Caco-2 (cell line): ENCODE measurements at regions of chr16 and their contacts with region 1.

Region 1: DNA sequence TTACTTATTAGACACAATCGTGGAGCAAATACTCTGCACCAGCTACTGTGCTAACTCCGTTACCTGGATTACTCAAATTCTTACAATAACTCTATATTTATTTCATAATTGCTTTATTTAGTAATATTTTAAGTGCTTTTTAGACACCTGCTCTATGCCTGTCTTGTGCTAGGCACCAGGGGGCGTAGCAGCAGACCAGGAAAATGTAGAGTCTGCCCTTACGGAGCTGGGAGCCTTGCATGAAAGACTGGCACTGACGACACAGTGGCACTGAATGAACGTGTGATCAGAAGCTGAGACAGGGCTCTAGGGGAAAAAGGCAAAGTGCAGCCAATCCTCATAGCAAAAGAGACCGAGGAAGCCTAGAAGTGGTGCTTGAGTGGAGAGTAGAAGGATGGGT is 486.5 kb downstream of the CDH13 start:
- DNase-seq: peak; percentile 46 to 56
- H3K4me3 ChIP-seq: no peak overlapping the region
- H3K4me3 Mint-ChIP-seq: no peak overlapping the region
- H3K27ac Mint-ChIP-seq: no peak overlapping the region
- H3K4me1 ChIP-seq: no peaks in the 10 kb centered on the region
- H3K4me1 Mint-ChIP-seq: no peaks in the 10 kb centered on the region
- H3K27me3 ChIP-seq: no peaks in the 10 kb centered on the region; the same call in 1 of the 2 replicates
- H3K27me3 Mint-ChIP-seq: peaks cover 2% of the 10 kb centered on the region
- CTCF ChIP-seq: peak; percentile 70 to 81

Region 2: GRCh38 chr16:83059237-83059636 is 54.1 kb before region 1 on chr16:
- CTCF ChIA-PET with region 1: no interaction called
- POLR2A ChIA-PET with region 1: no interaction called
- intact Hi-C with region 1: loop called (anchors 2 kb)
- DNase-seq: peak in 1 of 2 experiments; percentile 9
- H3K4me3 ChIP-seq: no peak overlapping the region
- H3K4me3 Mint-ChIP-seq: no peak overlapping the region
- H3K27ac Mint-ChIP-seq: no peak overlapping the region
- H3K4me1 ChIP-seq: no peaks in the 10 kb centered on the region
- H3K4me1 Mint-ChIP-seq: no peaks in the 10 kb centered on the region
- H3K27me3 ChIP-seq: no peaks in the 10 kb centered on the region
- H3K27me3 Mint-ChIP-seq: peaks cover 16% of the 10 kb centered on the region
- CTCF ChIP-seq: no peak

Region 3: GRCh38 chr16:83095941-83096692 is 17.2 kb before region 1 on chr16:
- CTCF ChIA-PET with region 1: no interaction called
- POLR2A ChIA-PET with region 1: no interaction called
- intact Hi-C with region 1: no loop called
- DNase-seq: peak; percentile 4 to 40
- H3K4me3 ChIP-seq: no peak overlapping the region
- H3K4me3 Mint-ChIP-seq: no peak overlapping the region
- H3K27ac Mint-ChIP-seq: no peak overlapping the region
- H3K4me1 ChIP-seq: 0 out of 2 replicates have a peak, but pooled peaks cover 7% of the 10 kb centered on the region
- H3K4me1 Mint-ChIP-seq: no peaks in the 10 kb centered on the region
- H3K27me3 ChIP-seq: no peaks in the 10 kb centered on the region
- H3K27me3 Mint-ChIP-seq: peaks cover 4% of the 10 kb centered on the region
- CTCF ChIP-seq: no peak

Region 4: GRCh38 chr16:83125999-83126568 is 12.8 kb after region 1 on chr16:
- CTCF ChIA-PET with region 1: no interaction called
- POLR2A ChIA-PET with region 1: no interaction called
- intact Hi-C with region 1: no loop called
- DNase-seq: no peak
- H3K4me3 ChIP-seq: no peak overlapping the region
- H3K4me3 Mint-ChIP-seq: no peak overlapping the region
- H3K27ac Mint-ChIP-seq: no peak overlapping the region
- H3K4me1 ChIP-seq: no peaks in the 10 kb centered on the region
- H3K4me1 Mint-ChIP-seq: no peaks in the 10 kb centered on the region
- H3K27me3 ChIP-seq: no peaks in the 10 kb centered on the region; the same call in 1 of the 2 replicates
- H3K27me3 Mint-ChIP-seq: no peaks in the 10 kb centered on the region
- CTCF ChIP-seq: no peak

Region 5: GRCh38 chr16:83137326-83137770 is 24.0 kb after region 1 on chr16:
- CTCF ChIA-PET with region 1: no interaction called
- POLR2A ChIA-PET with region 1: no interaction called
- intact Hi-C with region 1: loop called (anchors 2 kb)
- DNase-seq: peak; percentile 44 to 62
- H3K4me3 ChIP-seq: peak overlapping the region; percentile 10
- H3K4me3 Mint-ChIP-seq: peak overlapping the region; percentile 65
- H3K27ac Mint-ChIP-seq: peak overlapping the region; percentile 83
- H3K4me1 ChIP-seq: peaks cover 15% of the 10 kb centered on the region
- H3K4me1 Mint-ChIP-seq: peaks cover 17% of the 10 kb centered on the region
- H3K27me3 ChIP-seq: no peaks in the 10 kb centered on the region
- H3K27me3 Mint-ChIP-seq: no peaks in the 10 kb centered on the region
- CTCF ChIP-seq: no peak